AG04449 (cell line): ENCODE measurements at regions of chr9 and their contacts with region 1.

Region 1: GRCh38 chr9:100714372-100715099 is 136.7 kb downstream of the CAVIN4 start:
- DNase-seq: no peak
- H3K4me3 ChIP-seq: no peak overlapping the region
- CTCF ChIP-seq: peak; percentile 87

Region 2: GRCh38 chr9:100591639-100592412 is 122.7 kb before region 1 on chr9:
- CTCF ChIA-PET with region 1: no interaction called
- POLR2A ChIA-PET with region 1: no interaction called
- DNase-seq: no peak
- H3K4me3 ChIP-seq: no peak overlapping the region
- CTCF ChIP-seq: no peak

Region 3: GRCh38 chr9:100700689-100701318 is 13.7 kb before region 1 on chr9:
- CTCF ChIA-PET with region 1: interaction called, 13 read pairs
- POLR2A ChIA-PET with region 1: no interaction called
- DNase-seq: no peak
- H3K4me3 ChIP-seq: no peak overlapping the region
- CTCF ChIP-seq: no peak